ENCODE measurements at regions of chr10 and their contacts with region 1.

Region 1: GRCh38 chr10:73879296-73880173 is 5.2 kb upstream of the CAMK2G start:
- DNase-seq: peak; percentile 89 to 98 (median 90)
- ATAC-seq: peak; percentile 96
- H3K4me3 ChIP-seq: no peak overlapping the region
- H3K27ac ChIP-seq: no peak overlapping the region
- H3K4me1 ChIP-seq: peaks cover 21 to 31% of the 10 kb centered on the region in 2 experiments; a peak in 4 of 5 replicates
- H3K27me3 ChIP-seq: no peaks in the 10 kb centered on the region
- CTCF ChIP-seq: peak; percentile 96 to 100 (median 99)
- EP300 ChIP-seq: peak; percentile 79
- POLR2A ChIP-seq: no peak
- RAD21 ChIP-seq: peak; percentile 98 to 99

Region 2: GRCh38 chr10:73529089-73529832 is 350.3 kb before region 1 on chr10:
- CTCF ChIA-PET with region 1: interaction called, 4 read pairs
- POLR2A ChIA-PET with region 1: no interaction called
- in situ Hi-C with region 1: loop called (anchors 10 kb)
- intact Hi-C with region 1: loop called (anchors 1 kb)
- DNase-seq: peak; percentile 78 to 87 (median 82)
- ATAC-seq: peak; percentile 98
- H3K4me3 ChIP-seq: no peak overlapping the region
- H3K27ac ChIP-seq: no peak overlapping the region
- H3K4me1 ChIP-seq: peaks cover 0 to 2% of the 10 kb centered on the region in 2 experiments; a peak in 3 of 5 replicates
- H3K27me3 ChIP-seq: no peaks in the 10 kb centered on the region
- CTCF ChIP-seq: peak; percentile 82 to 98 (median 83)
- EP300 ChIP-seq: no peak; the same call in 1 of the 2 replicates
- POLR2A ChIP-seq: no peak
- RAD21 ChIP-seq: peak; percentile 100

Region 3: DNA sequence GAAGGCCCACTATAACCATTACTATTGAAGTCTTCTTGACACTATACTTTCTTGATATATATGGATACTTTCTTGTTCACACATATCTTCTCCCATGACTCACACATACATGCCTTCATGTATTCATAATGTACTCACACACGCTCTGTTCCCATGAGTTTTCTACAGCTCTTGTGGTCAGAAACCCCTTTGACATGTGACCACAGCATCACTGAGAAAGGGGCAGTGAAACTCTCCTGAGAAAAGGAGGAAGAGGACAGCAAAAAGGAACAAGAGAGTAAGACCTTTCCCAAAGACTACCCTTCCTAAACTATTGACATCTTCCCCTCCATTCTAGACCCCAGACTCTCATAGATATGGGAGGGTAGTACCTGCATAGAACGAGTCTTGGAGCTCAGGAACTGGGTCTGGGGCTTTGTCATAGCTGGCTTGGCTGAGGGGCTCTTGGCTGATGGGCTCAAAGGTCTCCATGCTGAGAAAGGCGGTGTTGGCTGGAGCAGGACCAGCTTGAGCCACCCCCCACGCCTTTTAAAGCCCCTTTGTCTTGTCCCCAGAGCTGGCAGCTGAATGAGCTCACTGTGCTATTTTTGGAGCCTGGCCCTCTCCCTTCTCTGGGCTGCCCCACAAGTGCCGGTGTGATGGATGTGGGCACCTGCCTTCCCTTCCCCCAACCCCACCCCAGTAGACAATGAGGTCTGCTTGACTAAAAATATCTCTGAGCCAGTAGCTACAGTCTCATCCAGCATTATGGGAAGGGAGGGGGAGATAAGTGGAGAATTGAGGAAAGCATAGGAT is 228.8 kb before region 1 on chr10:
- CTCF ChIA-PET with region 1: interaction called, 4 read pairs
- POLR2A ChIA-PET with region 1: no interaction called
- in situ Hi-C with region 1: no loop called
- intact Hi-C with region 1: loop called (anchors 2 kb)
- DNase-seq: peak in 1 of 4 experiments; percentile 14
- ATAC-seq: no peak
- H3K4me3 ChIP-seq: no peak overlapping the region
- H3K27ac ChIP-seq: peak overlapping the region; percentile 40; the same call in 1 of the 3 replicates
- H3K4me1 ChIP-seq: peaks cover 44 to 51% of the 10 kb centered on the region in 2 experiments
- H3K27me3 ChIP-seq: no peaks in the 10 kb centered on the region
- CTCF ChIP-seq: no peak
- EP300 ChIP-seq: no peak
- POLR2A ChIP-seq: no peak
- RAD21 ChIP-seq: no peak

Region 4: DNA sequence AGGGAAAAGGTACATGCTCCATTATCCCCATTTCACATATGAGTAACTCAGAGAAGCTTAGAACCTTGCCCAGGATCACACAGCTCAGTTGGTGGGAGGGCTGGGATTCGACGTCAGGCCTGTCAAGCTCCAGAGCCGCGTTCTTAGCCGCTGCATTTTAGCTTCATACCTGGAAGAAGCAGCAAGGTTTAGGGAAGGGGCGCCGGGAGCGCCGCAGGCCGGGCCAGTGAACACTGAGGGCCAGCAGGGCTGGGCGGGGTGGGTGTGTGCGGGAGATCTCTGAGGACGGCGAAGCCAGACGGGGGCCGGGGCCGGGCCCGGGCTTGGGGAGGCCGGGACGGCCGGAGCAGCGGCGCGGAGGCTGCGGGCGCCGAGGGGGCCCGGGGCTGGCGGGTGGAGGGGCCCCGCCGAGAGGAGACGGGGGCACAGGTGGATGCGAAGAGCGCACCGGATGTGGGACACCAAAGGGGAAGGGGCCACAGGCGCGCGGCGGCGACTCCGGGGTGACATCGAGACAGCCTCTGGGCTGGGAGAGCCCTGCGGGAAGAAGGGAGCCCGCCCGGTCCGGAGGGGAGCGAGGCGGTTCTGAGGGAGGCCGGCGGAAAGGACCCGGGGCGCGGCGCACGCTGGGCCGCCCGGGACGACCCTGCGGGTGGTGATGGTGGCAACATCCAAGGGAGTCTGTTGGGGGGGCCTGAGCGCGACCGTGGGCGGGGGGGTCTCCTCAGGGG is 68.6 kb before region 1 on chr10:
- CTCF ChIA-PET with region 1: no interaction called
- POLR2A ChIA-PET with region 1: no interaction called
- in situ Hi-C with region 1: no loop called
- intact Hi-C with region 1: loop called (anchors 2 kb)
- DNase-seq: peak; percentile 65 to 87 (median 70)
- ATAC-seq: peak; percentile 57
- H3K4me3 ChIP-seq: peak overlapping the region; percentile 85
- H3K27ac ChIP-seq: peak overlapping the region; percentile 85
- H3K4me1 ChIP-seq: peaks cover 30 to 48% of the 10 kb centered on the region in 2 experiments
- H3K27me3 ChIP-seq: no peaks in the 10 kb centered on the region
- CTCF ChIP-seq: no peak
- EP300 ChIP-seq: no peak
- POLR2A ChIP-seq: no peak
- RAD21 ChIP-seq: no peak

Region 5: GRCh38 chr10:73931767-73932619 is 52.5 kb after region 1 on chr10:
- CTCF ChIA-PET with region 1: no interaction called
- POLR2A ChIA-PET with region 1: interaction called, 5 read pairs
- in situ Hi-C with region 1: loop called (anchors 10 kb)
- intact Hi-C with region 1: no loop called
- DNase-seq: peak; percentile 77 to 87 (median 84)
- ATAC-seq: peak; percentile 73
- H3K4me3 ChIP-seq: no peak overlapping the region
- H3K27ac ChIP-seq: peak overlapping the region; percentile 68
- H3K4me1 ChIP-seq: peaks cover 20 to 36% of the 10 kb centered on the region in 2 experiments
- H3K27me3 ChIP-seq: no peaks in the 10 kb centered on the region
- CTCF ChIP-seq: no peak
- EP300 ChIP-seq: peak; percentile 27; the same call in 1 of the 2 replicates
- POLR2A ChIP-seq: no peak
- RAD21 ChIP-seq: no peak

Measured in K562 (cell line).